CD4-positive, alpha-beta T cell (primary cell): ENCODE measurements at regions of chr9 and their contacts with region 1.

Region 1: GRCh38 chr9:90142580-90142979 is 500.0 kb downstream of the DIRAS2 start:
- DNase-seq: peak; percentile 13 to 74 (median 50)
- ATAC-seq: no peak
- H3K4me3 ChIP-seq: no peak overlapping the region
- H3K4me3 Mint-ChIP-seq: no peak overlapping the region
- H3K27ac ChIP-seq: no peak overlapping the region
- H3K27ac Mint-ChIP-seq: no peak overlapping the region
- H3K4me1 ChIP-seq: no peaks in the 10 kb centered on the region
- H3K4me1 Mint-ChIP-seq: peaks cover 5% of the 10 kb centered on the region
- H3K27me3 ChIP-seq: peaks cover 4 to 7% of the 10 kb centered on the region in 2 experiments
- H3K27me3 Mint-ChIP-seq: peaks cover 36% of the 10 kb centered on the region
- CTCF ChIP-seq: peak; percentile 83

Region 2: GRCh38 chr9:90156315-90156714 is 13.7 kb after region 1 on chr9:
- CTCF ChIA-PET with region 1: no interaction called
- POLR2A ChIA-PET with region 1: no interaction called
- intact Hi-C with region 1: no loop called
- DNase-seq: no peak
- ATAC-seq: no peak
- H3K4me3 ChIP-seq: no peak overlapping the region
- H3K4me3 Mint-ChIP-seq: no peak overlapping the region
- H3K27ac ChIP-seq: no peak overlapping the region
- H3K27ac Mint-ChIP-seq: no peak overlapping the region
- H3K4me1 ChIP-seq: no peaks in the 10 kb centered on the region
- H3K4me1 Mint-ChIP-seq: no peaks in the 10 kb centered on the region
- H3K27me3 ChIP-seq: no peaks in the 10 kb centered on the region
- H3K27me3 Mint-ChIP-seq: peaks cover 6% of the 10 kb centered on the region
- CTCF ChIP-seq: no peak

Region 3: GRCh38 chr9:90219548-90220118 is 77.1 kb after region 1 on chr9:
- CTCF ChIA-PET with region 1: no interaction called
- POLR2A ChIA-PET with region 1: interaction called, 3 read pairs
- intact Hi-C with region 1: loop called in 1 of 2 experiments (anchors 2 kb)
- DNase-seq: peak in 12 of 14 experiments; percentile 4 to 58 (median 20)
- ATAC-seq: peak; percentile 48
- H3K4me3 ChIP-seq: no peak overlapping the region
- H3K4me3 Mint-ChIP-seq: no peak overlapping the region
- H3K27ac ChIP-seq: no peak overlapping the region
- H3K27ac Mint-ChIP-seq: no peak overlapping the region
- H3K4me1 ChIP-seq: no peaks in the 10 kb centered on the region
- H3K4me1 Mint-ChIP-seq: no peaks in the 10 kb centered on the region
- H3K27me3 ChIP-seq: peaks cover 3 to 8% of the 10 kb centered on the region in 2 experiments
- H3K27me3 Mint-ChIP-seq: peaks cover 48% of the 10 kb centered on the region
- CTCF ChIP-seq: peak; percentile 25